RWPE1 (cell line): ENCODE measurements at regions of chr3 and their contacts with region 1.

Region 1: GRCh38 chr3:165459924-165460835 is 264.0 kb upstream of the SLITRK3 start:
- DNase-seq: peak; percentile 15
- H3K27ac ChIP-seq: no peak overlapping the region
- CTCF ChIP-seq: no peak

Region 2: DNA sequence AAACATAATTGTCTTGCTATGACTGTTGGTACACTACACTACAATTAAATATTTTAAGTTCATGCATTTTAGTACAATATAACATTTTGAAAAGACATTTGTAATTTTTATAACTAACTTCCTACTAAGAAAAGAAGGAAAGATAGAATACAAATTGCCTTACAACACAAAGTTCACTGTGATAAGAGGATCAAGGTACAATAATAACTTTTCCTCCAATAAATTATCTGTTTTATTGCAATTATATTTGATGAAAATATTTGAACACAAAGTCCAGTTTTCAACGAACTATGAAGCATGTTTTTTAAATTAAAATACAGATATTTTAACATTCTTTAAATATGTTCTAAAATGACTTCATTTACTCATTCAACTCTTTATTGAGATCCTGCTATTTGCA is 348.8 kb before region 1 on chr3:
- CTCF ChIA-PET with region 1: no interaction called
- POLR2A ChIA-PET with region 1: no interaction called
- DNase-seq: no peak
- H3K27ac ChIP-seq: no peak overlapping the region
- CTCF ChIP-seq: no peak

Region 3: GRCh38 chr3:165603196-165603595 is 143.0 kb after region 1 on chr3:
- CTCF ChIA-PET with region 1: no interaction called
- POLR2A ChIA-PET with region 1: no interaction called
- DNase-seq: no peak
- H3K27ac ChIP-seq: no peak overlapping the region
- CTCF ChIP-seq: no peak

Region 4: GRCh38 chr3:165903901-165904630 is 443.9 kb after region 1 on chr3:
- CTCF ChIA-PET with region 1: interaction called, 10 read pairs
- POLR2A ChIA-PET with region 1: no interaction called
- DNase-seq: no peak
- H3K27ac ChIP-seq: no peak overlapping the region
- CTCF ChIP-seq: no peak